HEK293 (cell line): ENCODE measurements at regions of chr4 and their contacts with region 1.

Region 1: GRCh38 chr4:140012688-140013486 is 141.1 kb downstream of the MAML3 start:
- H3K4me3 ChIP-seq: no peak overlapping the region
- H3K27ac ChIP-seq: no peak overlapping the region
- H3K4me1 ChIP-seq: no peaks in the 10 kb centered on the region
- CTCF ChIP-seq: peak; percentile 47

Region 2: GRCh38 chr4:139958739-139959098 is 54.2 kb before region 1 on chr4:
- CTCF ChIA-PET with region 1: no interaction called
- POLR2A ChIA-PET with region 1: no interaction called
- H3K4me3 ChIP-seq: no peak overlapping the region
- H3K27ac ChIP-seq: no peak overlapping the region
- H3K4me1 ChIP-seq: peaks cover 3% of the 10 kb centered on the region; the same call in 1 of the 2 replicates
- CTCF ChIP-seq: no peak

Region 3: GRCh38 chr4:140252742-140253555 is 240.1 kb after region 1 on chr4:
- CTCF ChIA-PET with region 1: interaction called, 11 read pairs
- POLR2A ChIA-PET with region 1: no interaction called
- H3K4me3 ChIP-seq: peak overlapping the region; percentile 35
- H3K27ac ChIP-seq: peak overlapping the region; percentile 65; the same call in 1 of the 2 replicates
- H3K4me1 ChIP-seq: no peaks in the 10 kb centered on the region
- CTCF ChIP-seq: peak; percentile 3; the same call in 1 of the 2 replicates